Heart right ventricle (tissue), 16 donors: ENCODE measurements at regions of chr5 and their contacts with region 1.

Region 1: GRCh38 chr5:140244525-140245025 is 58.3 kb downstream of the PFDN1 start:
- DNase-seq: peak; percentile 92
- ATAC-seq: peak; percentile 36 to 72 (median 52)
- H3K4me3 ChIP-seq: peak overlapping the region in 1 of 10 donors; percentile 11
- H3K27ac ChIP-seq: peak overlapping the region in 7 of 10 donors; percentile 41 to 90 (median 82)
- H3K4me1 ChIP-seq: peaks cover 53 to 97% (median 81%) of the 10 kb centered on the region in 9 donors
- H3K27me3 ChIP-seq: no peaks in the 10 kb centered on the region
- CTCF ChIP-seq: peak; percentile 88 to 95 (median 93)

Region 2: GRCh38 chr5:140174465-140175366 is 69.9 kb before region 1 on chr5 and contains the start of gene CYSTM1:
- intact Hi-C with region 1: loop called in 6 of 10 experiments (anchors 2 to 10 kb)
- DNase-seq: peak; percentile 96
- ATAC-seq: peak; percentile 94 to 97 (median 95)
- H3K4me3 ChIP-seq: peak within 1 kb of the TSS; percentile 56 to 98 (median 88)
- H3K27ac ChIP-seq: peak within 1 kb of the TSS; percentile 81 to 99 (median 97)
- H3K4me1 ChIP-seq: peaks cover 0 to 44% (median 40%) of the 10 kb centered on the region in 9 donors
- H3K27me3 ChIP-seq: no peaks in the 10 kb centered on the region
- CTCF ChIP-seq: peak in 1 of 9 donors; percentile 6
- total RNA-seq, gene CYSTM1: 55.2 to 114 (median 95.3) TPM

Region 3: DNA sequence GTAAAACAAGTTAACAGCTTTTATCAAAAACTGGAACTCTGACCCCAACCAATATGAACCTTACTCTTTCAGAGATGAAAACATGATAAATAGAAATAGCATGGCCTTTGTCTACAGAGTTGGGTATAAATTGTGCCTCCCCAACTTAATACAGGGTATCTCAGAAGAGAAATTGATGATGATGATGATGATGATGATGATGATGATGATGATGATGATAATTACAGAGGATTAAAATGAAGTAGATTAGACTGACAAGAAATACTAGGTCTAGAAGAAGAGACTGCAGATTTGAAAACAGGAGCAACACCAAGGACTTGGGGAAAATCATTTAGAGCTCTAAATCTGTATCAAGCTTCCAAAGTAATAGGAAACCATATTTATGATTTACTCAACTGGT is 31.3 kb after region 1 on chr5:
- intact Hi-C with region 1: loop called in 1 of 10 experiments (anchors 2 kb)
- DNase-seq: no peak
- ATAC-seq: no peak
- H3K4me3 ChIP-seq: no peak overlapping the region
- H3K27ac ChIP-seq: peak overlapping the region in 1 of 10 donors; percentile 8
- H3K4me1 ChIP-seq: peaks cover 4 to 45% (median 22%) of the 10 kb centered on the region in 9 donors
- H3K27me3 ChIP-seq: no peaks in the 10 kb centered on the region
- CTCF ChIP-seq: no peak

Region 4: DNA sequence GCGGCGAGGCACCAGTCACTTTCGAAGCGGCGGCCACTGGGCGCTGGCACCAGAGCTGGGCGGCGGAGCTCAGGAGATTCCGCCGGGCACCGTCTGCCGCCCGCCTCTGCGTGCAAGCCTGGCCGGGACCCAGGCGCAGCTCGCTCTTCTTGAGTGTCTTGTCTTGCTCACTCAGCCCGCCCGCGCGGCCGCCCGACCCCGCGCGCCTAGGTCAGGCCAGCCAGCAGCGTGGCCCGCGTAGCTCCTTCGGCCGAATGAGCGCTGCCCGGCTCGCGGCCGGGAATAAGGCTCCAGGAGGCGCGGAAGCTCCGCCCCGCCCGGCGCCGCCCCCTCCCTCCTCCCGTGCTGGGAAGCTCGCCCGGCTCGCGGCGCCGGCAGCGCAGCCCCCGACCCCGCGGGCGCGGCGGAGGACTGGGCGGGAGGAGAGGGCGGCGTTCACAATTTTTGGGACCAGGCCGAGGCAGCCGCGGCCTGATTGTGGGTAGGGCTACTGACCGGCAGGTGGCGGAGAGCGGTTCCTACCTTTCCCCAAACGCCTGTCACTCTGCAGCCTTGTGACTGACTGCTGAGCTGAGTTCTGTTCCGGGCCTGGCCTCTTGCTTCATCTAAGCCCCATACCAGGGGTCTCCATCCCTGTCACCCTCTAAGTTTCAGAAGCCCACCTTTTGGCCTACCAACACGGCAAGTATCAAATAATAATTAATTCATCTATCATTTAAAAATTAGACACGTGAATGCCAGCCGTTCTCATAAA is 102.0 kb after region 1 on chr5 and contains the start of gene HBEGF:
- intact Hi-C with region 1: loop called (anchors 1 to 5 kb)
- DNase-seq: peak; percentile 84 to 88
- ATAC-seq: peak; percentile 70 to 91 (median 84)
- H3K4me3 ChIP-seq: peak within 1 kb of the TSS; percentile 78 to 97 (median 88)
- H3K27ac ChIP-seq: peak within 1 kb of the TSS; percentile 74 to 97 (median 95)
- H3K4me1 ChIP-seq: peaks cover 19 to 68% (median 60%) of the 10 kb centered on the region in 9 donors
- H3K27me3 ChIP-seq: no peaks in the 10 kb centered on the region
- CTCF ChIP-seq: peak; percentile 17 to 68 (median 47)
- total RNA-seq, gene HBEGF: 18.5 to 121 (median 33.3) TPM

Region 5: GRCh38 chr5:140357726-140358093 is 113.1 kb after region 1 on chr5:
- intact Hi-C with region 1: loop called in 2 of 10 experiments (anchors 2 to 5 kb)
- DNase-seq: peak; percentile 78
- ATAC-seq: peak; percentile 86 to 94 (median 92)
- H3K4me3 ChIP-seq: peak overlapping the region in 5 of 10 donors; percentile 7 to 41 (median 31)
- H3K27ac ChIP-seq: no peak overlapping the region
- H3K4me1 ChIP-seq: peaks cover 0 to 16% (median 10%) of the 10 kb centered on the region in 9 donors
- H3K27me3 ChIP-seq: no peaks in the 10 kb centered on the region
- CTCF ChIP-seq: peak; percentile 81 to 96 (median 91)